HepG2 (cell line): ENCODE measurements at regions of chr2 and their contacts with region 1.

Region 1: DNA sequence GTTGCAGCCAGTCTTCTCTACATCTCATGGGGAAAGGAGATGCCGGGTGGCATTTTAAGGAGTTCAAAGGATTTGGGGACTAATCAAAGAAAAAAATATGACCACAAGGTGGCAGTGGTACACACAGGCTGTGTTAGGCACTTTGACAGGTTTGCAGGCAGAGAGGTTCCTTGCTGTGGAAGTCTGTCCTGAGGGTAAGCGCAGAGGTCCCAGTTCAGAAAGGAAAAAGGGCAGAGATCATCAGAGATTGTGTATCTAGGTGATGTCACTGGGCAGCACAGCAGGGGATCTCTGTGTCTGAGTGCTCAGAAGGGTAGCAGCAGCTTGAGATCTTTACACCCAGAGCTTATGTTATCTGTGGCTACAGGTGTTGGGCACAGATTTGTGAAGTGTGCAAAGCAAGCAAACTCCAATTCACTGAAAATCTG is 231.4 kb downstream of the LRRTM1 start:
- DNase-seq: peak; percentile 60
- ATAC-seq: peak; percentile 97
- H3K4me3 ChIP-seq: no peak overlapping the region
- H3K27ac ChIP-seq: no peak overlapping the region
- H3K4me1 ChIP-seq: no peaks in the 10 kb centered on the region
- H3K27me3 ChIP-seq: no peaks in the 10 kb centered on the region
- CTCF ChIP-seq: peak; percentile 85
- EP300 ChIP-seq: no peak
- POLR2A ChIP-seq: no peak
- RAD21 ChIP-seq: peak; percentile 67

Region 2: GRCh38 chr2:80086831-80087230 is 13.7 kb after region 1 on chr2:
- CTCF ChIA-PET with region 1: no interaction called
- POLR2A ChIA-PET with region 1: no interaction called
- in situ Hi-C with region 1: no loop called
- intact Hi-C with region 1: no loop called
- DNase-seq: no peak
- ATAC-seq: no peak
- H3K4me3 ChIP-seq: no peak overlapping the region
- H3K27ac ChIP-seq: no peak overlapping the region
- H3K4me1 ChIP-seq: no peaks in the 10 kb centered on the region
- H3K27me3 ChIP-seq: no peaks in the 10 kb centered on the region
- CTCF ChIP-seq: no peak
- EP300 ChIP-seq: no peak
- POLR2A ChIP-seq: no peak
- RAD21 ChIP-seq: no peak

Region 3: DNA sequence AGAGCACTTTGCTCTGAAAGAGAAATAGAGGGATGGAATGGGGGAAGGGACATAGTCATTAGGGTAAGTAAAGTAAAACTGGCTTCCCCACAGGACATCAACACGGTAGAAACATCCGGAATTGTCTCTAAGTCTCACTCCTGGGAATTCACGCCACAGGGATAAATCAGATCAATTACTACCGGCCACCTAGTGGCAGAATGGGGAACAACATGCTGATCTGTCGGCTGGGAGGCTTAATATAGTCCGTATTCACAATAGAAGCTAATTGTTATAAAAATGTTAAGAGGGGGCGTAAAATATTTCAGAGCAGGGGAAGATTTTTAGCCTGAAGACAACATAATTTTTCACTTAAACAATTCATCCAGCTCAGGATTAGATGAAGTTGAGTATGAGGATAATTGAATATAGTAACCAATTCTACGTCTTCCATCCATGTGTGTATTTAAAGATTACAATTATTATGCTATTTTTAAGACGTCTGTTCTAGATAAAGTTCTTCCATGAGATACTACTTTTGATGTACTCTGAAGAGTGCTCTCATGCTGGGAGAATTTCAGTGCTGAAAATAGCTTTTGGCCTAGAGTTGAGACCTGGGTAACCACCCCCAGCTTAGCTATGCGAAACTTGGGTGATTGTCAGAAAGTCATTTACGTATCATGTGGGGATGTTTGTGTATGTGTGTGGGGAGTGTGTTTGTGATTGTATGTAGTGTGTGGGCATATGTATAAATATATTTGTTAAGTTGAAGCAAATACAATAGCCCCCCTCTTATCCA is 165.7 kb after region 1 on chr2:
- CTCF ChIA-PET with region 1: interaction called, 10 read pairs
- POLR2A ChIA-PET with region 1: no interaction called
- in situ Hi-C with region 1: no loop called
- intact Hi-C with region 1: loop called (anchors 1 kb)
- DNase-seq: peak; percentile 14
- ATAC-seq: peak; percentile 82
- H3K4me3 ChIP-seq: no peak overlapping the region
- H3K27ac ChIP-seq: no peak overlapping the region
- H3K4me1 ChIP-seq: no peaks in the 10 kb centered on the region
- H3K27me3 ChIP-seq: no peaks in the 10 kb centered on the region
- CTCF ChIP-seq: peak; percentile 67
- EP300 ChIP-seq: no peak
- POLR2A ChIP-seq: no peak
- RAD21 ChIP-seq: 0 out of 2 replicates have a peak, but pooled peaks have one; percentile 13

Region 4: DNA sequence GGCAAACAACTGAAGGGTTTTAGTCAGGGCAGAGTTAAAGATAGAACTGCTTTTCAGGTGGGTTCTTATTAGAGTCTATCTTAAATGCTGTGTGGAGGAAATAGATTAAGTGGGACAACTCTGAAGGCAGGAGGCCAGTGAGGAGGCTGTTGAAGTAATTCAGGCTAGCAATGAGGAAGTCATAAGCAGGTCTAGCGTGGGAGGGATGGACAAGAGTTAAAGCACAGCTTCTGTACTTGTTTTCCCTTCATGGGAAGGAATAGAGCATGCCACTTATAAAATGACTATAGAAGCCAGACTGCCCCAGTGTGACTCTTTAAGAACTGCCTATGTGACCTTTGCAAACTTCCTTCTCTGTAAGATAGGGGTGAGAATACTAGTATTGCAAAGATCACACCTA is 433.4 kb after region 1 on chr2:
- CTCF ChIA-PET with region 1: no interaction called
- POLR2A ChIA-PET with region 1: no interaction called
- in situ Hi-C with region 1: no loop called
- intact Hi-C with region 1: no loop called
- DNase-seq: no peak
- ATAC-seq: no peak
- H3K4me3 ChIP-seq: no peak overlapping the region
- H3K27ac ChIP-seq: no peak overlapping the region
- H3K4me1 ChIP-seq: no peaks in the 10 kb centered on the region
- H3K27me3 ChIP-seq: no peaks in the 10 kb centered on the region
- CTCF ChIP-seq: no peak
- EP300 ChIP-seq: no peak
- POLR2A ChIP-seq: no peak
- RAD21 ChIP-seq: no peak

Region 5: GRCh38 chr2:82023710-82024109 is 1950.6 kb after region 1 on chr2:
- CTCF ChIA-PET with region 1: no interaction called
- POLR2A ChIA-PET with region 1: no interaction called
- in situ Hi-C with region 1: no loop called
- intact Hi-C with region 1: loop called (anchors 5 kb)
- DNase-seq: no peak
- ATAC-seq: peak; percentile 64
- H3K4me3 ChIP-seq: no peak overlapping the region
- H3K27ac ChIP-seq: no peak overlapping the region
- H3K4me1 ChIP-seq: no peaks in the 10 kb centered on the region
- H3K27me3 ChIP-seq: no peaks in the 10 kb centered on the region
- CTCF ChIP-seq: peak; percentile 51
- EP300 ChIP-seq: no peak
- POLR2A ChIP-seq: no peak
- RAD21 ChIP-seq: no peak